ENCODE measurements at regions of chr12 and their contacts with region 1.

Region 1: DNA sequence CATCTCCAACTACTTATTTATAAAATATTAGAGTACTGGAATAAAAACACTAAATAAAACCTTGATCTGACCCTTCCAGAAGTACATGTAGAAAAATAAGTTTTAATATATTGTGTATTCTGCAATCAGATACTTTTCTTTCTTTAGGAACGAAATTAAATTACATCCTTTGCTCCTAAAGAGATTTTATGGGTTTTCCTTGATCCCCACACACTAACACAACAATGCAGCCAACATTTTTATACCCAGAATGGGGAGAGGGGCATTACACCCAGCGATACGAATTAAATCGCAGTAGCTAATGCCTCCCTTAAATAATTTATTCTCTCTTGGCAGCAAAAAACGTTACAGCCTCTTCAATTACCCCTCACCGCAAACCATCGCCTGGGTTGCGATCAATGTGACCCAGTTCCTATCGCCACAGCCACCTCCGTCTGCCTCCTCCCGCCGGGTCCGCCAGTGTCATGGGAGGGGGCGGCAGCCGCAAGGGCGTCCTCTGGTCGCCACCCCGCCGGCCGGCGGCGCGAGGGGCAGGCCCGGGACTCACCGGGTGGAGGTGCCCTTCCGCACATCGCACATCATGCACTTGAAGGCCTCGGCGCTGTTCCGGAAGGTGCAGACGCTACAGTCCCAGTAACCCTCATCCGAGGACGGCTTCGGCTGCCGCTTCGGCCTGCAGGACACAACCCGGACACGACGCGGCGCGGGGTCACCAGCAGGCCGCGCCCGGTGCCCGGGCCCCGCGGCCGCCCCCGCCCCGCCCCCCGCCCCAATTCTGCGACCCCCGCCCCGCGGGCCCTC is 796 bp downstream of the YAF2 start:
- DNase-seq: peak; percentile 72 to 80 (median 77)
- H3K4me3 ChIP-seq: peak overlapping the region; percentile 33 to 70
- H3K4me3 Mint-ChIP-seq: peak overlapping the region; percentile 86 to 92 (median 90)
- H3K27ac ChIP-seq: peak overlapping the region; percentile 66
- H3K27ac Mint-ChIP-seq: peak overlapping the region; percentile 82 to 94 (median 93)
- H3K4me1 ChIP-seq: peaks cover 49% of the 10 kb centered on the region
- H3K4me1 Mint-ChIP-seq: peaks cover 29 to 68% (median 36%) of the 10 kb centered on the region in 4 donors
- H3K27me3 ChIP-seq: no peaks in the 10 kb centered on the region
- H3K27me3 Mint-ChIP-seq: no peaks in the 10 kb centered on the region

Region 2: GRCh38 chr12:42097971-42098370 is 139.3 kb before region 1 on chr12:
- CTCF ChIA-PET with region 1: no interaction called
- POLR2A ChIA-PET with region 1: no interaction called
- intact Hi-C with region 1: loop called (anchors 10 kb)
- DNase-seq: peak; percentile 49 to 76 (median 68)
- H3K4me3 ChIP-seq: peak overlapping the region in 1 of 2 donors; percentile 13
- H3K4me3 Mint-ChIP-seq: peak overlapping the region; percentile 70 to 96 (median 88)
- H3K27ac ChIP-seq: peak overlapping the region; percentile 70
- H3K27ac Mint-ChIP-seq: peak overlapping the region; percentile 87 to 99 (median 96)
- H3K4me1 ChIP-seq: peaks cover 41% of the 10 kb centered on the region
- H3K4me1 Mint-ChIP-seq: peaks cover 21 to 43% (median 31%) of the 10 kb centered on the region in 4 donors
- H3K27me3 ChIP-seq: no peaks in the 10 kb centered on the region
- H3K27me3 Mint-ChIP-seq: no peaks in the 10 kb centered on the region

Region 3: DNA sequence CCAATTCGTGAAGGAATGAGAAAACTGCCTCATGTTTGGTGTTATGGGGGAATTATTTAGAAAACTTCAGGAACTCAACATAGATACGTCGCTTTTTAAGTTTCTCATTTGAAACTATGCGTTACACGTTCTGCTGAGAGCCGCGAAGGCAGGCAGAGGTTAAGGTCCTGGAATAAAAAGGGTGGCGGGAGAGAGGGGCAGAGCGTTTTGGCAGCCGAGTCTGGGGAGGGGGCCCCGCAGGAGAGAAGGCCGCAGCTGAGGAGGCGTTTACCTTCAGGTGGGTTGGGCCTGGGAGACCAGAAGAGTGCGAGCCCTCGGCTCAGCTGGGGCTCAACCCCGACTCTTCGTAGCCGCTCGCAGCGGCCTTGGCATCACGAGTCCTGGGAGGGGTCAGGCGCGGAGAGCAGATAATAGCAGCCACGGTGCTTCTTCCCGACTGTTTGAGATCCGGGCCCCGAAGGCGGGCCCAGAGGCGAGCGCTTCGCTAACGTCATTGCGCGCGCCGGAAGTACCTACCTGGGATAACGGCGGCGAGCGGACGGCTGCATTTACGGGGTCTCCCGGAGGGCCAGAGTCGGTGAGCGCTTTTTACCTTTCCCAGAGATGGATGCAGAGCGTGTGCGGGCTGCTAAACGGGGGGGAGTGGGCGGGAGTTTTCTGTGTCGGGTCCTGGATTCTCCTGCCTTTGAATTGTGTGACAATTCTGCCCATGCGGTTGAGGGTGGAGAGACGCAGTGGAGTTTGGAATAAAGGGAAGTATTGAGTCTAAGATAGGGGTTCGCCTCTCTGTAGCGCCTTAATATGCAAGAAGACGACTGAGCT is 88.6 kb after region 1 on chr12 and contains the starts of genes PPHLN1 and ZCRB1:
- CTCF ChIA-PET with region 1: interaction called, 6 read pairs
- POLR2A ChIA-PET with region 1: interaction called, 4 read pairs
- intact Hi-C with region 1: loop called (anchors 1 kb)
- DNase-seq: peak; percentile 74 to 78 (median 76)
- H3K4me3 ChIP-seq: peak within 1 kb of the TSS; percentile 69 to 84
- H3K4me3 Mint-ChIP-seq: peak within 1 kb of the TSS; percentile 94 to 99 (median 99)
- H3K27ac ChIP-seq: peak within 1 kb of the TSS; percentile 79
- H3K27ac Mint-ChIP-seq: peak within 1 kb of the TSS; percentile 89 to 99 (median 99)
- H3K4me1 ChIP-seq: peaks cover 46% of the 10 kb centered on the region
- H3K4me1 Mint-ChIP-seq: peaks cover 29 to 60% (median 48%) of the 10 kb centered on the region in 4 donors
- H3K27me3 ChIP-seq: no peaks in the 10 kb centered on the region
- H3K27me3 Mint-ChIP-seq: no peaks in the 10 kb centered on the region
- total RNA-seq, gene PPHLN1: 98.0 to 104 TPM
- total RNA-seq, gene ZCRB1: 21.2 to 27.1 TPM

Region 4: DNA sequence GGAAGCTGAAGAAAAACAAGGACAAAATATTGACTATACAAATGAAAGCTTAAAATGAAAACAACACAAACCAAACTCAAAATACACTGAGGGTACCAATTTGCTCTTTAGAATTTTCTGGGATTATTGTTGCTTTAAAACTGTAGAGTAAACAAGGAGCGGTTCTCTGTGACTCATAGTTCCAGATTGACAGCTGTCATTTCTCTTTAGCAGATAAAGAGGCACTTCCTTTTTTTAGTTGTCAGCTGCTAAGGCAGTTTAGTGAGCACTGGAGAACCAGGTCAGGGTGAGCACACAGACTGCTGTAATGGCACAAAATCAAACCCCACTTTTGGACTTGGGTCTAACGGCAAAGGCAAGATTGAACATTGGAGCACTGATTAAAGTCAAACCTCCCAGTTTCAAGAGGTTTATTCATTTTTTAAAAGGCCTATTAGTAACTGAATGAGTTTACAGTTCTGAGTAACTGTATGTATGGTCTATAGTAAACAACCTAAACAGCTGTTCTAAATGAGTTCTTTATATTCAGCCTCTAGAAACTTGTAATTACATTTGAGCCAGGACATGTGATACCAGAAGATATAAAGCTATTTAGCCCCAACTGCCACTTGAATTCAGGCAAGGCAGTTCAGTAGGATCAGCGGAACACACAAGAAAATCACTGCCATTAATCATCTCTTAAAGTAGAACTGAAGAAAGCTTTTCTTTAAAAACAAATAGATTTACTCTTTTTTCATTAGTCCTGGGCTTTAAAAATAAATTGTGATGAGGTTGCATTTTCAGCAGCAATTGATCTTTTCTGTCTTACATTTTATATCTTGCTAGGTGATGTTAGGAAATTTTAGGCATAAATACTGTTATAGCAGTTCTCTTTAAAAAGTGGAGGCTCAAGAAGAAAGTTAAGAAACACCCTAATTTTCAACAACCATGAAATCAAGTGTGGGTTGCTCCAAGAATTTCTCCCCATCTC is 424.0 kb after region 1 on chr12:
- CTCF ChIA-PET with region 1: no interaction called
- POLR2A ChIA-PET with region 1: no interaction called
- intact Hi-C with region 1: no loop called
- DNase-seq: no peak
- H3K4me3 ChIP-seq: no peak overlapping the region
- H3K4me3 Mint-ChIP-seq: no peak overlapping the region
- H3K27ac ChIP-seq: no peak overlapping the region
- H3K27ac Mint-ChIP-seq: no peak overlapping the region
- H3K4me1 ChIP-seq: no peaks in the 10 kb centered on the region
- H3K4me1 Mint-ChIP-seq: no peaks in the 10 kb centered on the region
- H3K27me3 ChIP-seq: no peaks in the 10 kb centered on the region
- H3K27me3 Mint-ChIP-seq: peaks cover 0 to 2% of the 10 kb centered on the region in 2 donors

Measured in CD4-positive, alpha-beta memory T cell (primary cell).